GM18951 (cell line): ENCODE measurements at regions of chr20 and their contacts with region 1.

Region 1: GRCh38 chr20:46307139-46307998 is 929 bp downstream of the CDH22 start:
- POLR2A ChIP-seq: no peak

Region 2: GRCh38 chr20:46446851-46447250 is 139.5 kb after region 1 on chr20:
- in situ Hi-C with region 1: loop called (anchors 10 kb)
- POLR2A ChIP-seq: no peak